ENCODE measurements at regions of chr19 and their contacts with region 1.

Region 1: GRCh38 chr19:47130591-47131227 is at the start of gene SAE1:
- DNase-seq: peak; percentile 98 to 99
- H3K4me3 ChIP-seq: peak within 1 kb of the TSS; percentile 90 to 99 (median 94)
- H3K27ac ChIP-seq: peak within 1 kb of the TSS; percentile 94
- H3K4me1 ChIP-seq: peaks cover 0 to 8% (median 7%) of the 10 kb centered on the region in 4 experiments; a peak in 5 of 7 replicates
- H3K27me3 ChIP-seq: no peaks in the 10 kb centered on the region
- CTCF ChIP-seq: peak; percentile 34 to 63 (median 52); a peak in 3 of 4 replicates
- EP300 ChIP-seq: no peak
- POLR2A ChIP-seq: peak; percentile 78 to 84
- RAD21 ChIP-seq: peak; percentile 38 to 41; a peak in 2 of 4 replicates
- total RNA-seq, gene SAE1: 268 and 273 TPM in 2 replicates

Region 2: DNA sequence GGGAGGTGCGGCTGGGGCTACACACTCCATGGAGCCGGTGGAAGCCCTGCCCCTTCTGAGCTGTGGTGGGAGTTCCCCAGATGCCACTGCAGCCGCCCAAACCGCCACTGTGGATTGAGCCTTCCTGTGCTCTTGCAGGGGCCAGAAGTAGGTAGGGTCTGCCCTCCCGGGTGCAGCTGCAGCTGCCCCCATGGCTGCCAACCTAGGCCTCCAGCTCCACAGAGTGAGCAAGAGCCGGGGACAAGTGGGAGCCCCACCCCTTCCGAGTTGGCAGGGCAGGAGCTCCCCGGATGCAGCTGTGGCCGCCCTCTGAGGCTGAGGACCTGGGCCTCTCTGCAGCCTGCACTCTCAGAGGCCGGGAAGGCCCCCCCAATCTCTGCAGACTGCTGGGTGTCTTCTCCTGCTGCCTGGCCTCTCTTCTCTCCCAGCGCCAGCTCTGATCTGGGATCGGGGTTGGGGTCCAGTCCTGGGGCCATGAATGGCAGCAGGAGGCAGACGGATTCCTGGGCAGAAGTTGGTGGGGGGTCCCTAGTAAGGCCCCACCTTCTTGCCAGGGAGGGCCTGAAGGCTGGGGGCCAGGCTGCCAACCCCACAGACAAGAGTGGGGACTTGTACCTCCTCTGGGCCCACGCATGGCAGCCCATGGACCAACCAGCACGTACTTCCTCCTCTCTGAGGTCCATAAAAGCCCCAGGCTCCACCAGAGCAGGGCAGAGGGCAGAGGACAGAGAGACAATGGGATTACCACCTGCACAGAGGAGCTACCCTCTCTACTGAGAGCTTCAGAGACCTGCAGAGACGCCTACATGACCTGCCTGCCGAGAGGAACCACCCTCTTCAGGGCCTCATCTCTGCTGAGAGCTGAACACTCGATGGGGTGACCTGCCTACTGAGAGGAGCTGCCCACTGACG is 309.0 kb before region 1 on chr19:
- CTCF ChIA-PET with region 1: no interaction called
- POLR2A ChIA-PET with region 1: no interaction called
- DNase-seq: no peak
- H3K4me3 ChIP-seq: no peak overlapping the region
- H3K27ac ChIP-seq: no peak overlapping the region
- H3K4me1 ChIP-seq: no peaks in the 10 kb centered on the region; a peak in 1 of 7 replicates
- H3K27me3 ChIP-seq: no peaks in the 10 kb centered on the region
- CTCF ChIP-seq: no peak
- EP300 ChIP-seq: no peak
- POLR2A ChIP-seq: no peak
- RAD21 ChIP-seq: no peak

Region 3: DNA sequence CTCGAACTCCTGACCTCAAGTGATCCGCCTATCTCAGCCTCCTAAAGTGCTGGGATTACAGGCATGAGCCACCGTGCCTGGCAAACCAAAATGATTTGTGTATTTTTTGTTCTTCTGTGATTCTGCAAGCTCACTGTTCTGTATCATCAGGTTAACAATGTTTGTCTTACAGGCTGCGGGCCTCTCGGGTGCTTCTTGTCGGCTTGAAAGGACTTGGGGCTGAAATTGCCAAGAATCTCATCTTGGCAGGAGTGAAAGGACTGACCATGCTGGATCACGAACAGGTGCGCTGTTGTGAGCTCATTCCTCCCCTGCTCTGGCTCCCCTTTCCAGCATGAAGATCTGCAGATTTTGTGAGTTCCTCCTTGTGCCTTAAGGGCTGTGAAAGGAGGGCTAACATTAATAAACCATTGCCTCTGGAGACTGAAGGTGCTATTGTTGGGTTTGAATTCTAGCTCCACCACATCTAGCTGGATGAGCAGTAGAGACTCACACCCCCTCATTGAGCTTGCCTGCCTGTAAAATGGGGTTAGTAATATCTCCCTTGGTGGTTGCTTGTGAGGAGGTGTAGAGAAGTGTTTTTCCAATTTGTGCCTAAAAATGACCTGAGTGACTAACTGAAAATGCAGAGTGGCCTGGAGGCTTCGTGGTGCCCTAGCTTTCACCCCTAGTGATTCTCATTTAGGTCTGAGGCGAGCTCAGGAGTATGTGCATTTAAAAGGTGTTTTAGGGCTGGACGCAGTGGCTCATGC is 12.8 kb after region 1 on chr19:
- CTCF ChIA-PET with region 1: interaction called, 7 read pairs
- POLR2A ChIA-PET with region 1: interaction called, 25 read pairs
- DNase-seq: no peak
- H3K4me3 ChIP-seq: no peak overlapping the region
- H3K27ac ChIP-seq: peak overlapping the region; percentile 42; the same call in 1 of the 2 replicates
- H3K4me1 ChIP-seq: no peaks in the 10 kb centered on the region
- H3K27me3 ChIP-seq: no peaks in the 10 kb centered on the region
- CTCF ChIP-seq: no peak
- EP300 ChIP-seq: no peak
- POLR2A ChIP-seq: no peak
- RAD21 ChIP-seq: no peak

Region 4: DNA sequence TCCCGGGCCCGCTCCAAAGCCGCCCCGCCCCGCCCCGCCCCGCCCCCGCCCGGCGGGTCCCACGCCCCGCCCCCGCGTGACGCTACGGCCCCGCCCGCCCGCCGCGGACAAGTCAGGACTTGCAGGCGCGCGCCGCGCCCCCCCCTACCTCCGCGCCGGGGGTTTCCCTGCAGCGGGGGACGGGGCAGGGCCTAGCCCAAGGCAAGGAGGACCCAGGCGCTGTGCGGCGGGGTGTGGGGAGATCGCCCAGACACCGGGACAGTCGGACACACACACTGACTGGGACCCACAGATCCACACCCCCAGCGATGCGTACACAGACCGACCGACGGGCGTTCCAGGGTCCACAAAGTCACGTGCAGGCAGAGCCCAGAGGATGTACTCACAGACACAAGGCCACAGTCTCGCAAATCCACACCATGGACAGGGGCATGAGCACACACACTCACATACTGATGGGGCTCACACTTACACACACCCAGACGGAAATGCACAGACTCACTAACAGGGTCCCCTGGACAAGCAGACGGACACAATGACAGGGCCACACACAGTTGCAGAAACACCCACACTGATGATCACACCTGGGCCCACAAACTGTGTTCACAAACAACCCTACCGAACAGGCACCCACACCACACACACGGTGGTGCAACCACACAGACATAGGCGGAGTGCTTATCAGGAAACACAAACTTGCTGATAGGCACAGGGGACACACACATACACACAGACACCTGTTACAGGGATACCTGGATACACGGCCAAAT is 100.7 kb after region 1 on chr19:
- CTCF ChIA-PET with region 1: no interaction called
- POLR2A ChIA-PET with region 1: no interaction called
- DNase-seq: peak in 1 of 2 experiments; percentile 86
- H3K4me3 ChIP-seq: peak overlapping the region; percentile 50 to 99 (median 70)
- H3K27ac ChIP-seq: peak overlapping the region; percentile 94
- H3K4me1 ChIP-seq: peaks cover 12 to 36% (median 24%) of the 10 kb centered on the region in 4 experiments
- H3K27me3 ChIP-seq: no peaks in the 10 kb centered on the region; a peak in 1 of 7 replicates
- CTCF ChIP-seq: no peak
- EP300 ChIP-seq: 0 out of 3 replicates have a peak, but pooled peaks of 1 of the 2 experiments have one; percentile 64
- POLR2A ChIP-seq: peak in 1 of 2 experiments; percentile 71; a peak in 2 of 3 replicates
- RAD21 ChIP-seq: no peak

Region 5: DNA sequence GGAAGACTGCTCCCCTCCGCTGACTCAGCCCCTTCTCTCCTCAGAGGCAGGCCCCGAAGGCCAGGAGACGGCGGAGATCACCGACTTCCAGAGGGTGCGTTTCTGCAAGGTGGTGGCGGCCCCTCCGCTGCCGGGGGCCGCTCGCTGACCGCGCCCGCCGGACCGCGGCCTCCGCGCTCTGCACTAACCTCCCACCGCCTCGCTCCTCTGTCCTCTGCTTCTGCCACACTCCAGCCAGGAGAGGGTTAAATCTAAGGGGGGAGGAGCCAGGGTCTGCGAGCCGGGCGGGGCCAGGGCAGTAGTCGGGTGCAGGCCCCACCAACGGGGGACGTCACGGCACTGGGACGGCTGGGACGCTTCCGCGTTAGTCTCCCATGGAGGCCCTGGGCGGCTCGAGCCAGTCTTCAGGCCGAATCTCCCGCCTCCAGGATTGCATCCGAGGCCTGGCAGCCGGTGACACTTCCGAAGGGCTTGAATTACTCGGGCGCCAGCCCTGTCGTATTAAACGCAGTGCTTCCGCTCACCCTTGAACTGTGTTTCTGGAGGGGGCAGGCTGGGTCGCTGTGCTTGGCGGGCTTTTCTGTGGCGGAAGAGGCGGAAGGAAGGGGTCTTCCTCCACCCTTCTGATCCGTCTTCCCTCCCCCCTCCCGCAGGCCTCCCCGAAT is 142.7 kb after region 1 on chr19:
- CTCF ChIA-PET with region 1: no interaction called
- POLR2A ChIA-PET with region 1: no interaction called
- DNase-seq: peak; percentile 79 to 92
- H3K4me3 ChIP-seq: peak overlapping the region; percentile 70 to 84 (median 78)
- H3K27ac ChIP-seq: peak overlapping the region; percentile 92
- H3K4me1 ChIP-seq: peaks cover 0 to 19% (median 8%) of the 10 kb centered on the region in 4 experiments; a peak in 6 of 7 replicates
- H3K27me3 ChIP-seq: peaks cover 0 to 10% (median 6%) of the 10 kb centered on the region in 4 experiments; a peak in 5 of 7 replicates
- CTCF ChIP-seq: no peak
- EP300 ChIP-seq: no peak
- POLR2A ChIP-seq: peak; percentile 71 to 78; a peak in 2 of 3 replicates
- RAD21 ChIP-seq: no peak